Esophagus muscularis mucosa (tissue), 4 donors: ENCODE measurements at regions of chr17 and their contacts with region 1.

Region 1: GRCh38 chr17:59372138-59372857 is 40.8 kb downstream of the YPEL2 start:
- DNase-seq: no peak
- H3K4me3 ChIP-seq: peak overlapping the region in 3 of 4 donors; percentile 3 to 11 (median 5)
- H3K27ac ChIP-seq: peak overlapping the region; percentile 90 to 92 (median 91)
- H3K4me1 ChIP-seq: peaks cover 99 to 100% (median 100%) of the 10 kb centered on the region in 4 donors
- H3K27me3 ChIP-seq: no peaks in the 10 kb centered on the region
- CTCF ChIP-seq: no peak
- EP300 ChIP-seq: no peak
- POLR2A ChIP-seq: no peak

Region 2: DNA sequence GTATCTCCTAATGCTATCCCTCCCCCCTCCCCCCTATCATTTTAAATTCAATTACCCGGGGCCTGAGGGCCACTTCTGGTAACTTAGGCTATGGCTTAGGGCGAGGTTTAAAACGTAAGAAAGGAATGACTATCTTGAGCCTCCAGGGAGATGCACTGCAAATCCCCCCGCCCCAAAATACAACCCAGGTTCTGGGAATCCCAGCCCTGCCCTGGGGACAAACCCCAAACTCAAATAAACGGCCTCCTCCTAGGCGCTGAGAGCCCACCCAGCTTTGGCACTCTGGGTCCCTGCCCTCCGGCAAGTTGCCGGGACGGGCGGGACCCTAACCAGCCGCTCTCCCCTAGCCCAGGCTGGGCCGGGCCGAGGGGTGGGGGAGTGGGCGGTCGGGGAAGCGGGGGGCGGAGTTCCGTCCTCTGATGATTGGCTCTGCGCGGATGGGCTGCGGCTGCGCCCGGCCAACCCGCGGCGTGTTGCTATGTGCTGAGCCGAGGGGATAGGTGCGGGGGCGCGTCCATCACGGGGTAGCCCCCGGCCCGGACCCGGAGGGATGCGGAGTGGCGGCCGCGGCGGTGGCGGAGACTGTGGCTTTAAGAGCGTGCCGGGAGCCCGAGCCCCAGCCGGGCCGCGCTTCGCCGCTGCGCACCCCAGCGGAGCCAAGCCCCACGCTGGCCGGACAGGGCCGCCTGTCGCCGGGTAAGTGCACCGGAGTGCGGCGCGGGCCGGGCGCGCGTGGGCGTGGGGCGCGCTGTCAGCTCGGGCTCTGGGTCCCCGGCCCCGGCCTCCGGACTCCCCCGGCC is 41.0 kb before region 1 on chr17 and contains the start of gene YPEL2:
- intact Hi-C with region 1: loop called (anchors 5 kb)
- DNase-seq: peak; percentile 99
- H3K4me3 ChIP-seq: peak within 1 kb of the TSS; percentile 76 to 98 (median 78)
- H3K27ac ChIP-seq: peak within 1 kb of the TSS; percentile 90 to 97 (median 93)
- H3K4me1 ChIP-seq: peaks cover 61 to 72% (median 69%) of the 10 kb centered on the region in 4 donors
- H3K27me3 ChIP-seq: no peaks in the 10 kb centered on the region
- CTCF ChIP-seq: no peak
- EP300 ChIP-seq: no peak
- POLR2A ChIP-seq: peak; percentile 42
- total RNA-seq, gene YPEL2: 27.7 to 62.9 (median 28.8) TPM